Common myeloid progenitor, CD34-positive (primary cell): ENCODE measurements at regions of chr14 and their contacts with region 1.

Region 1: DNA sequence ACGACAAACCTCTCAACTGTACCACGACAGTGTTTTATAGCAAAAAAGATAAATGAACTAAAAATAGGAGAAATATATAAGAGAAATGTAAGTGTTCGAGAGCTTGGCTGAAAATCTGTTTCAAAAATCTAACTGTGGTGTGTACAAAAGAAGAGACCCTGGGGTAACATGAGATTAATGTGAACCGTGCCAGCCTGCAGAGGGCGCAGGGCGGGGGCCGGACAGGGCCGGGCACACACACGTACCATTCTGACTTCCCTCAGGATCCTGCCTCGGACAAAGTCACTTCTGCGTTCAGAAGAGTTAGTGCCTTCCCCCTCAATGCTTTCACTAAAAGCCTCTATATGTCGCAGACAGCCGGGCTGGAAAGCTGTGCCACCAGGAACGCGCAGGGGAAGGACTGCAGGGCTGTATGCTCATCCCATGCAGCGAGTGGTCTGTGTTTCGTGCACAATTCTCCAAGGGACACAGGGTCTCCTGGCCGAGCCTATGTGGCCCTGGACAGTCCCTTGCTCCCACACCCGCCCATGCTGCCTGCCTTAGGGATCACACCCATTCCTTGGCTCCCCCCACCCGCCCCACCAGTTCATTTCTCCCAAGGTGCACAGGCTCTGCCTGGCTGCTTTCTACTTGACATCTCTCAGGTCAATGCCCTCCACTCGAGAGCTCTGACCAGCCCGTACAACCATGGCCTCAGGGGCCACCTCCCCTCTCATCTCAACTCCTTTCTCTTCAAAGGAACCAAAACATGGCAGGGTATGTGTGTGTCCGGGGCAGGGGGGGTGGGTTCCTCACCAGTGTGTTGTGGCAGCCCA is 8.5 kb downstream of the CDCA4 start:
- DNase-seq: peak in 2 of 3 donors; percentile 23 to 39
- H3K4me3 ChIP-seq: peak overlapping the region in 1 of 7 experiments; percentile 11
- H3K27ac ChIP-seq: peak overlapping the region in 1 of 2 experiments; percentile 7
- H3K4me1 ChIP-seq: peaks cover 0 to 31% (median 14%) of the 10 kb centered on the region in 4 experiments
- H3K27me3 ChIP-seq: no peaks in the 10 kb centered on the region

Region 2: DNA sequence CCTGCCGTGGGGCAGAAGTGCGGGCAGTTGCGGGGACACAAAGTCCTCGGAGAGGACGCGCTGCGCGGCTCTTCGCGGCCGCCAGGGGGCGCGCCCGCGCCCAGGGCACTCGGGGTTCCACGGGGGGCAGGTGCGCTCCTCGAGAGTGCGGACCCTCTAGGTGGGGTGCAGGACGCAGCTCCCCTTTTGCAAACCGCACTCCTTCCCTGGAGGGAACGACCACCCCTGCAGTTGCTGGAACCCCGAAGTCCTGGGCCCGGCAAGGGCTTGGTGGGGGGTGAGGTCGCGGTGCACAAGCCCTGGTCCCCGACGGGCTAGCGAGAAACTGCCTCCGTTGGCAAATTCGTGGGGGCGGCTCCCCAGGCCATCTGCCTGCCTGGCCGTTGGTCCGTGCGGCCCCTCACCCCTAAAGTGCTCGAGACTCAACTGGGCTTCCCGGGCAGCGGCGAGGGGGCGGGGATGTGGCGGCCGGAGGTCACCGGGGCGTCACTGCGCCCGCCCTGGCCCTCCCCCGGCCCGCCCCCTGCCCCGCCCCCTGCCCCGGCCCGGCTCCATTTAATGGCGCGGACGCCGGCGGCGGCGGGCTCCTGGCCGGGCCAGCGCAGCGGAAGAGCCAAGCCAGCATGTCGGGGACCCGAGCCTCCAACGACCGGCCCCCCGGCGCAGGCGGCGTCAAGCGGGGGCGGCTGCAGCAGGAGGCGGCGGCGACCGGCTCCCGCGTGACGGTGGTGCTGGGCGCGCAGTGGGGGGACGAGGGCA is 288.6 kb before region 1 on chr14 and contains the start of gene ADSS1:
- CTCF ChIA-PET with region 1: no interaction called
- POLR2A ChIA-PET with region 1: no interaction called
- DNase-seq: peak; percentile 36 to 69 (median 66)
- H3K4me3 ChIP-seq: peak within 1 kb of the TSS; percentile 34 to 83 (median 69)
- H3K27ac ChIP-seq: no peak within 1 kb of the TSS
- H3K4me1 ChIP-seq: peaks cover 0 to 17% (median 12%) of the 10 kb centered on the region in 4 experiments
- H3K27me3 ChIP-seq: peaks cover 0 to 3% (median 0%) of the 10 kb centered on the region in 5 experiments

Region 3: DNA sequence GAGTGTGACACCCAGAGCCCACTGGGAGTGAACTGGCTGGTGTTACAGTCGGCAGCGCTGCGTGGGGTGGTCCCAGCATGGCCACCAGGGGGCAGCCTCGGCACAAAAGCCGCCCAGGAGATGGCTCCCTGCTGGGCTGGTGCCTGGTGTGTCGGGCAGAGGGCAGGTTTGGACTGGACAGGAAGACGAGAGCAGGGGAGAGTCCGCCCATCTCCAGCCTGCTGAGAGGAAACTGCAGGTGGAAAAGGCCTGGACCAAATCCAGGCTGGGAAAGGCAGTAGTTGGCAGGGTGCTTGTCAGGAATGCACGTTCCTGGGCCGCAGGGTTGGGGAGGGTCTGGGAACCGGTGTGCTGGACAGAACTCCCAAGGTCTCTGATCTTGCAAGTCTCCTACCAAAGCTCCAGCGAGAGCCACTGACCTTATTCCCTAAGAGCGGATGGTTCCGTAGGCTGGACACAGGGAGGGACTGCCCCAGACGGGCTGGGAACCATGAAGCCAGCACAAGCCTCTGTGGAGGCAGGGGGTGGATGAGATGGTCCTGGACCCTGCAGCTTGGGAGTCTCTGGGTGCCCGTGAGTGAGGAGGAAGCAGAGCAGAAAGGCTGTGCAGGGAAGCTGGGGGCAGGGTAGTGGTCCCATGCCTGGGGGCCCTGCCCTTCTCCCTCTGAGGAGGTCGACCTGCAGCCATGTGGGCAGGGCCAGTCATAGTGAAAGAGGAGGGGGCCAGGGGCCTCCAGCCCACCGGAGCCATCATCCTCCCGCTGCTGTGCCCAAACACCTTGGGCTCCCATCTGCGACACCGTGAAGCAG is 36.0 kb before region 1 on chr14:
- CTCF ChIA-PET with region 1: interaction called, 13 read pairs
- POLR2A ChIA-PET with region 1: no interaction called
- DNase-seq: peak; percentile 70 to 84 (median 79)
- H3K4me3 ChIP-seq: no peak overlapping the region
- H3K27ac ChIP-seq: no peak overlapping the region
- H3K4me1 ChIP-seq: peaks cover 0 to 16% (median 13%) of the 10 kb centered on the region in 4 experiments
- H3K27me3 ChIP-seq: peaks cover 0 to 28% (median 18%) of the 10 kb centered on the region in 5 experiments

Region 4: GRCh38 chr14:104993808-104994591 is 18.4 kb before region 1 on chr14:
- CTCF ChIA-PET with region 1: interaction called, 12 read pairs
- POLR2A ChIA-PET with region 1: interaction called, 3 read pairs
- DNase-seq: peak; percentile 37 to 79 (median 72)
- H3K4me3 ChIP-seq: no peak overlapping the region
- H3K27ac ChIP-seq: no peak overlapping the region
- H3K4me1 ChIP-seq: peaks cover 0 to 3% (median 1%) of the 10 kb centered on the region in 4 experiments
- H3K27me3 ChIP-seq: no peaks in the 10 kb centered on the region